ENCODE measurements at regions of chr3 and their contacts with region 1.

Region 1: GRCh38 chr3:150220799-150221198 is 187.3 kb upstream of the TSC22D2 start:
- DNase-seq: no peak
- ATAC-seq: no peak
- H3K4me3 ChIP-seq: no peak overlapping the region
- H3K4me3 Mint-ChIP-seq: peak overlapping the region in 5 of 10 donors; percentile 6 to 71 (median 27)
- H3K27ac ChIP-seq: no peak overlapping the region
- H3K27ac Mint-ChIP-seq: no peak overlapping the region
- H3K4me1 ChIP-seq: no peaks in the 10 kb centered on the region
- H3K4me1 Mint-ChIP-seq: peaks cover 2 to 6% (median 4%) of the 10 kb centered on the region in 7 donors
- H3K27me3 ChIP-seq: no peaks in the 10 kb centered on the region
- H3K27me3 Mint-ChIP-seq: peaks cover 32 to 53% (median 42%) of the 10 kb centered on the region in 5 donors

Region 2: DNA sequence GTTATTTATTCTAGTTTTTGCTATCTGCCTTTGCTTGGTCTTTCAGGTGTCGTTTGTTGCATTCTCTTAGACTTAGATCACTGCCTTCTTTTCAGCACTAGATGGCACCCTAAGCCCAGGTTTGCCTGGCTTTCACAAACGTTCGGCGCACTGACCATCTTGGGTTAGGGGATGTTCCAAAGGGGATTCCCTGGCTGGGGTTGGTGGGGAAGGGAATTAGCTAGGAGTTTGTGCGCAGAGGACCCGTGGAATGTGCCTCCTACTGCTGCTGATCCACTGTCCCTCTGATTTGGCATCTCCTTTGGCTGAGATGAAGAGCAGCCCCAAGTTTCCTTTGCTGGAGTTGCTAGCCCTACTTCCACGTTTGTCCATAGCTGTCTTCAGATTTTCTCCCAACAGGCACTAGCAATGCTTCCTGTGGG is 284.0 kb before region 1 on chr3:
- CTCF ChIA-PET with region 1: no interaction called
- POLR2A ChIA-PET with region 1: no interaction called
- intact Hi-C with region 1: loop called (anchors 1 kb)
- DNase-seq: peak in 8 of 9 donors; percentile 3 to 31 (median 19)
- ATAC-seq: peak; percentile 62
- H3K4me3 ChIP-seq: no peak overlapping the region
- H3K4me3 Mint-ChIP-seq: no peak overlapping the region
- H3K27ac ChIP-seq: no peak overlapping the region
- H3K27ac Mint-ChIP-seq: peak overlapping the region in 1 of 9 donors; percentile 67
- H3K4me1 ChIP-seq: no peaks in the 10 kb centered on the region
- H3K4me1 Mint-ChIP-seq: peaks cover 12 to 46% (median 33%) of the 10 kb centered on the region in 7 donors
- H3K27me3 ChIP-seq: no peaks in the 10 kb centered on the region
- H3K27me3 Mint-ChIP-seq: no peaks in the 10 kb centered on the region

Region 3: DNA sequence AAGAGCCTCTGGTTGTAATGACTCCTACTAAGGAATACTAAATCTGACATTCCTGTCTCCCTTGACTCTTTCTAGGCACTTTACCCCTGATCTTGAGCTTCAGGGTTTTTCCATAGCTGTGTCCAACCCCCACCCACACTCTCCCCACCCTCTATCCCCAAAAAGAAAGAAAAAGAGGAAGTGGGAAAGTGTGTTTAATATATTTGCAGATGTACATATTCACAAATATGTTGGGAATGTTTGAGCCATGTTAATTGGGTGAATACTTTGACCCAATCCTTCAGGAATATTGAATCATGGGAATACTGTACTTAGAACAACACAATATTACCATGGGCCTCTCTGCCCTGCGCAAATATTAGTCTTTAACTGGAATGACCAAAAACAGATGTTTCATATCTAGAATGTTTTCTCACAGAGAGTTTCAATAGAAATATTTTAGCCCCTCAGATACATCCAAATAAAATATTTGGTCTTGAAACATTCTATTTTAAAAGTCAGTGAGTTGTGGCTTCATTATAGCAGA is 230.3 kb before region 1 on chr3:
- CTCF ChIA-PET with region 1: no interaction called
- POLR2A ChIA-PET with region 1: no interaction called
- intact Hi-C with region 1: no loop called
- DNase-seq: no peak
- ATAC-seq: no peak
- H3K4me3 ChIP-seq: no peak overlapping the region
- H3K4me3 Mint-ChIP-seq: no peak overlapping the region
- H3K27ac ChIP-seq: no peak overlapping the region
- H3K27ac Mint-ChIP-seq: no peak overlapping the region
- H3K4me1 ChIP-seq: no peaks in the 10 kb centered on the region
- H3K4me1 Mint-ChIP-seq: no peaks in the 10 kb centered on the region
- H3K27me3 ChIP-seq: peaks cover 0 to 2% of the 10 kb centered on the region in 2 donors
- H3K27me3 Mint-ChIP-seq: peaks cover 10 to 38% (median 35%) of the 10 kb centered on the region in 5 donors

Measured in naive thymus-derived CD4-positive, alpha-beta T cell (primary cell).